Caco-2 (cell line): ENCODE measurements at regions of chr2 and their contacts with region 1.

Region 1: DNA sequence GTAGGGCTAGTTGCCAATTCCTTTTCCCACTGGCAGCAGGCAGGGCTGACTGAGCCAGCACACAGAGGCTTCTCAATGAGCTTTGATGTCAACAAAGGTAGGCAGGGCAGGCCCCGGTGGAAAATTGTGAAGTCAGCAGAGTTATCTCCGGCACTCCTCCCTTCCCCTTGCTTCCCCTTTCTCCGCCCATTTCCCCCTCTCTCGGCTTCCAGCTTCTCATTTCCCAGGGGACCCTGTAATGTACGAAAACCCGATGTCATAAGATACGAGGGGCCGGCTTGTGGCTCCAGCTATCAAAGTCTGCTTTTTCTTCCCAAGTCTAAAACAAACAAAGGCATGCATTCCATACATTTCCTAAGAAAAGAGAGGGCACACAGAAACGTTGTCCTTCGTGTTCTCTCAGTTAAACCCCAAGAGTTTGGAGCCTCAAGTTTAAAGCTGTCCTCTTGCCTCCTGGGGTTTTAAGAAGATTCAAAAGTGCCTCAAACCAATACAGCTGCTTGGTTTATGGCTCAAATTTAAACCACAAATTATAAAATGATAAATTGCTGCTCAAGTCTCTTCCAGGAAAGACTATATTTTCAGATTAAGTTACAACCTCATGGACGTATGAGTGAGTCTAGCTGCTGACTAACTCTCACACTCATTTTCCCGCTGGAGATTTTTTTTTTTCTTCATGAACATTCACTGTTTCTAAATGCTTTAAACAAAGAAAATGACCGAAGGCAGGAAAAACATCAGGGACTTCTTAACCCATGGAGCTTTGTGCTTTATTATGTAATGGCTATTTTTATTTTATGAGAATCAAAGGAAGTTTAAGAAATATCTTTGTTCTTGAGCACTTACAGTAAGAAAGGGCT is 27.2 kb upstream of the EML4 start:
- DNase-seq: peak; percentile 91 to 96
- H3K4me3 ChIP-seq: peak overlapping the region; percentile 17
- H3K4me3 Mint-ChIP-seq: peak overlapping the region; percentile 71
- H3K27ac Mint-ChIP-seq: peak overlapping the region; percentile 95
- H3K4me1 ChIP-seq: peaks cover 53% of the 10 kb centered on the region
- H3K4me1 Mint-ChIP-seq: peaks cover 55% of the 10 kb centered on the region
- H3K27me3 ChIP-seq: no peaks in the 10 kb centered on the region
- H3K27me3 Mint-ChIP-seq: no peaks in the 10 kb centered on the region
- CTCF ChIP-seq: no peak

Region 2: GRCh38 chr2:42060718-42061619 is 80.9 kb before region 1 on chr2:
- CTCF ChIA-PET with region 1: no interaction called
- POLR2A ChIA-PET with region 1: no interaction called
- intact Hi-C with region 1: no loop called
- DNase-seq: no peak
- H3K4me3 ChIP-seq: no peak overlapping the region
- H3K4me3 Mint-ChIP-seq: no peak overlapping the region
- H3K27ac Mint-ChIP-seq: peak overlapping the region; percentile 96
- H3K4me1 ChIP-seq: peaks cover 84% of the 10 kb centered on the region
- H3K4me1 Mint-ChIP-seq: peaks cover 60% of the 10 kb centered on the region
- H3K27me3 ChIP-seq: no peaks in the 10 kb centered on the region
- H3K27me3 Mint-ChIP-seq: no peaks in the 10 kb centered on the region
- CTCF ChIP-seq: no peak

Region 3: DNA sequence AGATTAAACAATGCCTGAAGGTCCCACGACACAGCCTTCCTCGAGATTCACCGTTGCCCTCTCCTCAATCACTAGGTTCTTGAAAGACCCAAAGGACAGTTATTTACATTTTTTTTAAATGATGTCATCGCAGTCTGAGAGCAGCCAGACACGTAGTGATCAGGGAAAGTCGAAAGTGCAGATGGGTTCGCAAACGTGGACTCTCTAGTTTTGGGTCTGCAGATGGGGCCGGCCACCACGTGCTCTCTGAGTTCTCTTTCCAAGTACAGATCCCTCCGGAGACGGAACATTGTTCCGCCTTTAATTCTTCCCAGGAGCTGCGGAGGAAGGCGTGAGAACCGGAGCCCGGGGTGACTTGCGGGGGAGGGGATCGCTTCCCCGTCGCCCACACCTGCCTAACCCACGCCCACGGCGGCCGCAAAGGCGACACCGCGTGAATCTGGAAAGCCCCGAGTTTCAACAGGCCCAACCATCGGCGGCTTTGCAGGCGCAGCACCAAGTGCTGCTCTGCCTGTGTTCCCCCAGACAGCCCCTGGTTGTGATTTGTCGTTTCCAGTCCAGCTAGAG is 39.8 kb before region 1 on chr2:
- CTCF ChIA-PET with region 1: no interaction called
- POLR2A ChIA-PET with region 1: interaction called, 3 read pairs
- intact Hi-C with region 1: loop called (anchors 1 kb)
- DNase-seq: peak; percentile 72 to 78
- H3K4me3 ChIP-seq: peak overlapping the region; percentile 29
- H3K4me3 Mint-ChIP-seq: peak overlapping the region; percentile 84
- H3K27ac Mint-ChIP-seq: peak overlapping the region; percentile 96
- H3K4me1 ChIP-seq: peaks cover 49% of the 10 kb centered on the region
- H3K4me1 Mint-ChIP-seq: peaks cover 13% of the 10 kb centered on the region
- H3K27me3 ChIP-seq: no peaks in the 10 kb centered on the region
- H3K27me3 Mint-ChIP-seq: no peaks in the 10 kb centered on the region
- CTCF ChIP-seq: no peak

Region 4: GRCh38 chr2:42191285-42192009 is 49.5 kb after region 1 on chr2:
- CTCF ChIA-PET with region 1: interaction called, 7 read pairs
- POLR2A ChIA-PET with region 1: interaction called, 6 read pairs
- intact Hi-C with region 1: loop called (anchors 1 kb)
- DNase-seq: peak; percentile 47 to 82
- H3K4me3 ChIP-seq: no peak overlapping the region
- H3K4me3 Mint-ChIP-seq: peak overlapping the region; percentile 65
- H3K27ac Mint-ChIP-seq: peak overlapping the region; percentile 77
- H3K4me1 ChIP-seq: peaks cover 84% of the 10 kb centered on the region
- H3K4me1 Mint-ChIP-seq: peaks cover 52% of the 10 kb centered on the region
- H3K27me3 ChIP-seq: no peaks in the 10 kb centered on the region
- H3K27me3 Mint-ChIP-seq: no peaks in the 10 kb centered on the region
- CTCF ChIP-seq: no peak

Region 5: DNA sequence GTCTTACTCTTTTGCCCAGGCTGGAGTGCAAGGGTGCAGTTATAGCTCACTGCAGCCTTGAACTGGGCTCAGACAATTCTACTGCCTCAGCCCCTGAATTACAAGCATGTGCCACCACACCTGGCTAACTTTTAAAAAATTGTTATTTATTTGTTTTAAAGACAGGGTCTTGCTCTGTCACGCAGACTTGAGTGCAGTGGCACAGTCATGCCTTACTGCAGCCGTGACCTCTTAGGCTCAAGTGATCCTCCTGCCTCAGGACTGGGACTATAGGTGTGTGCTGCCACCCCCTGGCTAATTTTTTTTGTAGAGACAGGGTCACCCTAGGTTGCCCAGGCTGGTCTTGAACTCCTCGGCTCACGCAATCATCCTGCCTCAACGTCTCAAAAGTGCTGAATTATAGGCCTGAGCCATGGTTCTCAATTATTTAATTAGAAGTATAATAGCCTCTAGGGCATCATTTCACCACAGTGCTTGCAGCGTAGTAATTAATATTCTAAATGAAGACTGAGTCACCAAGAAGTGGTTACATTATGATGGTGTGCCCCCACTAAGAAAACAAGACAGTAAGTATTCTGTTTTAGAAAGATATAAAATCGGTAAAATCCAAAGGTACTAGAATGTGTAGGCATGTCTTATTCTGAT is 96.8 kb after region 1 on chr2:
- CTCF ChIA-PET with region 1: no interaction called
- POLR2A ChIA-PET with region 1: interaction called, 3 read pairs
- intact Hi-C with region 1: loop called (anchors 2 kb)
- DNase-seq: peak; percentile 75 to 78
- H3K4me3 ChIP-seq: no peak overlapping the region
- H3K4me3 Mint-ChIP-seq: no peak overlapping the region
- H3K27ac Mint-ChIP-seq: no peak overlapping the region
- H3K4me1 ChIP-seq: peaks cover 33% of the 10 kb centered on the region
- H3K4me1 Mint-ChIP-seq: peaks cover 49% of the 10 kb centered on the region
- H3K27me3 ChIP-seq: no peaks in the 10 kb centered on the region
- H3K27me3 Mint-ChIP-seq: no peaks in the 10 kb centered on the region
- CTCF ChIP-seq: peak; percentile 51 to 55